ENCODE measurements at regions of chr22 and their contacts with region 1.

Region 1: DNA sequence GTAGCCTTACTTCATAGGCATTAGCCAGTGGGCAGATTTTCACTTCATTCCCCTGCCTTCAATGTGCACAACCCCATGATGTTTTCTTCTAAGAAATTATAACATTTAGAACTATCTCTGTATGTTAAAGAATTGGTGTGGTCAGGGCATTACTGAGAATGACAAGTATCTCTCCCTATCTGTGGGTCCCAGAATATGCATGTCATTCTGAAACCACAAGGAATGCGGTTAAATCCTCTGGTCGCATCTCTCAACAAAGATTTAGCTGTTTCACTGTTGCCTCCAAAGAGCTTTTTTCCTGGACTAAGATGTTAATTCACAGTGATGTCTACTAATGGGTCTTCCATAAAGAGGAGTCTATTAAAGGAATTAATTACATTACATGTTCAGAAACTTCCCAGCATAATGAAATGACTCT is 62.7 kb downstream of the LIF start:
- DNase-seq: peak; percentile 42
- H3K4me3 Mint-ChIP-seq: peak overlapping the region; percentile 13
- H3K27ac Mint-ChIP-seq: peak overlapping the region; percentile 92
- H3K4me1 Mint-ChIP-seq: peaks cover 93% of the 10 kb centered on the region
- H3K27me3 Mint-ChIP-seq: no peaks in the 10 kb centered on the region

Region 2: GRCh38 chr22:30104501-30105156 is 79.2 kb before region 1 on chr22:
- CTCF ChIA-PET with region 1: interaction called, 19 read pairs
- POLR2A ChIA-PET with region 1: interaction called, 9 read pairs
- DNase-seq: peak; percentile 29
- H3K4me3 Mint-ChIP-seq: peak overlapping the region; percentile 51
- H3K27ac Mint-ChIP-seq: peak overlapping the region; percentile 87
- H3K4me1 Mint-ChIP-seq: peaks cover 74% of the 10 kb centered on the region
- H3K27me3 Mint-ChIP-seq: no peaks in the 10 kb centered on the region

Region 3: GRCh38 chr22:30196141-30196879 is 12.4 kb after region 1 on chr22:
- CTCF ChIA-PET with region 1: interaction called, 9 read pairs
- POLR2A ChIA-PET with region 1: interaction called, 34 read pairs
- DNase-seq: peak; percentile 79
- H3K4me3 Mint-ChIP-seq: peak overlapping the region; percentile 42
- H3K27ac Mint-ChIP-seq: peak overlapping the region; percentile 95
- H3K4me1 Mint-ChIP-seq: peaks cover 78% of the 10 kb centered on the region
- H3K27me3 Mint-ChIP-seq: no peaks in the 10 kb centered on the region

Region 4: GRCh38 chr22:30221121-30221992 is 37.5 kb after region 1 on chr22:
- CTCF ChIA-PET with region 1: interaction called, 6 read pairs
- POLR2A ChIA-PET with region 1: interaction called, 17 read pairs
- DNase-seq: peak; percentile 81
- H3K4me3 Mint-ChIP-seq: peak overlapping the region; percentile 42
- H3K27ac Mint-ChIP-seq: peak overlapping the region; percentile 96
- H3K4me1 Mint-ChIP-seq: peaks cover 81% of the 10 kb centered on the region
- H3K27me3 Mint-ChIP-seq: no peaks in the 10 kb centered on the region

Region 5: DNA sequence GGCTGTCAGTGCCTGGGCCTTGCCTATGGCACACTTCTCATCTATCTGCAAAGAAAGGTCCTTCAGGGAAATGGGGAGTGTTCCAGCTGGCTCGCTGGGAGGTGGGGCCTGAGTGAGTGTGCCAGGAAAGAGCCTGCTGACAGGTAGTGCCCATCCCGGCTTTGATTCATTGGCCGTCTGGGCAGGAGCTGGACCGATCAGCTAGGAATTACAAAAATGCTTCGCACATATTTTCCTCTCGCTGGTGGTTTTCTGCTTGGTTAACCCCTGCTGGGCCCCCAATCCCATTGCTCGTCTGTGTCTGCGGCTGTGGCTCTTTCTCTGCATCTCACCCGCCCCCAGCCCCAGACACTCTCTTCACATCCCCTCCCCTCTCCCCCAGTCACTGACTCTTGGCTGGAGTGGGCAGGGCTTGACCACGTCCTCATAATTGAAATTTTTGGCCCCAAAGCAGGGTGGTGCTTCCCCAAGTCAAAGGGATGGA is 51.9 kb after region 1 on chr22:
- CTCF ChIA-PET with region 1: interaction called, 3 read pairs
- POLR2A ChIA-PET with region 1: interaction called, 18 read pairs
- DNase-seq: no peak
- H3K4me3 Mint-ChIP-seq: no peak overlapping the region
- H3K27ac Mint-ChIP-seq: no peak overlapping the region
- H3K4me1 Mint-ChIP-seq: peaks cover 22% of the 10 kb centered on the region
- H3K27me3 Mint-ChIP-seq: no peaks in the 10 kb centered on the region

Region 6: DNA sequence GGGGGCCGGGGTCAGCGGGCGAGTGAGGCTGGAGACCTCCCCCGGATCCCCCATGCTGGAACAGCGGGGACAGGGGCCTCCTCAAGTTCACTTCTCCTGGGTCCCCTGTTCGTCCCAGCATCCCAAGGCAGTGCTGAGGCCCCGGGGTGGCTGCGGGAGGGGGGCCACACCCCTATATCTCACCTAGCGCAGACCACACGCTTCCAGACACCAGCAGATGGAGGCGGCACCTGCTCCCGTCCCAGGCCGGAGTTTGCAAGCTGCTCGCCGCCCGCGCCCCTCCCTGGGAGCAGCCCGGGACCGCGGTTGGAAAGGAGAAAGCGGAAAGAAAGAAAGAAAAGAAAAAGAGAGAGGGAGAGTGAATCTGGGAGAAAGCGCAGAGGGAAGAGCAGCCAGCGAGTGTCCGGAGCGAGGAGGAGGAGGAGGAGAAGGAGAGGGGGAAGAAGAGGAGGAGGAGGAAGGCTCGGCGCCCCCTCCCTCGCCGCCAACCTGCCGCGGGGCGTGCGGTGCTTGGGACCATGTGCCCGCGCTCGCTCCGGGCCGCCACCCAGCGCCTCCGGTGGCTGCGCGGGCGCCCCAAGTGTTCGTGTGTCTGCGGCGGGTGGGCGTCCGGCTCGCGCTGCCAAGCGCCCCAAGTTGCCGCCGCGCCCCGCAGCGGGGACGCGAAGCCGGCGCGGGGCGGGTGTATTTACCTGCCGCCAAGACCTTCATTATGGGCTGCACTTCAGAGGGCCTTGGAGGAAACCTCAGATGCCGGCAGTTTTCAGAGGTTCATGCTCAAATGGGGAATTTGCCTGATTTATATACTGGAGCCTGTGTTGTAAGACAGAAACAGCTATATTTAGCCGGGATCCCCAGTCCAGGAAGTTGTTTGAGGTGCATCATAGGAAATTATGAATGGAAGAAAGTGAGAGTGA is 62.4 kb after region 1 on chr22 and contains the start of gene LIF:
- CTCF ChIA-PET with region 1: interaction called, 5 read pairs
- POLR2A ChIA-PET with region 1: interaction called, 35 read pairs
- DNase-seq: peak; percentile 67
- H3K4me3 Mint-ChIP-seq: peak within 1 kb of the TSS; percentile 95
- H3K27ac Mint-ChIP-seq: peak within 1 kb of the TSS; percentile 91
- H3K4me1 Mint-ChIP-seq: peaks cover 78% of the 10 kb centered on the region
- H3K27me3 Mint-ChIP-seq: no peaks in the 10 kb centered on the region
- total RNA-seq, gene LIF: 94.6 to 94.8 TPM

Region 7: GRCh38 chr22:30262917-30263741 is 79.3 kb after region 1 on chr22:
- CTCF ChIA-PET with region 1: interaction called, 4 read pairs
- POLR2A ChIA-PET with region 1: interaction called, 21 read pairs
- DNase-seq: peak; percentile 81
- H3K4me3 Mint-ChIP-seq: peak overlapping the region; percentile 99
- H3K27ac Mint-ChIP-seq: peak overlapping the region; percentile 80
- H3K4me1 Mint-ChIP-seq: peaks cover 62% of the 10 kb centered on the region
- H3K27me3 Mint-ChIP-seq: no peaks in the 10 kb centered on the region